Vagina (tissue), 2 donors: ENCODE measurements at regions of chr3 and their contacts with region 1.

Region 1: DNA sequence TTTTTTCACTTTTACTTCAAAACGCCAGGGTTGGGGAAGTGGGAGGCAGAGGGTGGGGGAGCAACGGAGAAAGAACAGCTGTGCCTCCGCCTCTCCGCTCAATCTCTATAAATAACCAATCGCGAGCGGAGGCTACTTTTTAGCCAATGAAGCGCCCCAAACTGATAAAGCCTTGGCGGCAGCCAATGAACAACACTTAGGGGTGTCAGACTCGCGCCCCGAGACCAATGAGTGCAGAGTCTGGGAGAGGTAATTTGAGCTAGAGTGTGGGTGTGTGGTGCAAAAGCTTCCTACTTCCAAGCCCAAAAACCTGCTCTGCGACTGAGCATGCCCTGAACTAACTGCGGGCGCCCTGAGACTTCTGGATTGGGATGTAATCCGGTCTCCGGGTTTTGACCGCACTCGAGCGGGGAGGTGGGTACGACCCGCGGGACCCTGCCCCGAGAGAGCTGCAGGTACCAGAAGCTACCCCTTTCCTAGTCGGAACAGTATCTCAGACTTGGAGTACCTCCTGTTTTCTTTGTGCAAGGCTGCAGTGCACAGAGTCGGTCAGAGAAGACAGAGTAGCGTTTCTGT is 800 bp upstream of the RAP2B start:
- DNase-seq: peak in 1 of 2 donors; percentile 100
- H3K4me3 ChIP-seq: peak overlapping the region; percentile 85 to 87
- H3K27ac ChIP-seq: peak overlapping the region; percentile 92
- H3K4me1 ChIP-seq: peaks cover 36% of the 10 kb centered on the region
- H3K27me3 ChIP-seq: no peaks in the 10 kb centered on the region
- CTCF ChIP-seq: no peak
- POLR2A ChIP-seq: peak in 1 of 2 donors; percentile 34

Region 2: GRCh38 chr3:153043729-153044328 is 117.4 kb before region 1 on chr3:
- intact Hi-C with region 1: loop called (anchors 10 kb)
- DNase-seq: no peak
- H3K4me3 ChIP-seq: no peak overlapping the region
- H3K27ac ChIP-seq: no peak overlapping the region
- H3K4me1 ChIP-seq: peaks cover 4% of the 10 kb centered on the region
- H3K27me3 ChIP-seq: no peaks in the 10 kb centered on the region
- CTCF ChIP-seq: no peak
- POLR2A ChIP-seq: no peak